ENCODE measurements at regions of chr16 and their contacts with region 1.

Region 1: GRCh38 chr16:49617016-49617629 is 238.8 kb downstream of the ZNF423 start:
- DNase-seq: no peak
- ATAC-seq: no peak
- H3K4me3 ChIP-seq: no peak overlapping the region
- H3K27ac ChIP-seq: no peak overlapping the region
- H3K4me1 ChIP-seq: peaks cover 16 to 18% of the 10 kb centered on the region in 2 experiments
- H3K27me3 ChIP-seq: peaks cover 13% of the 10 kb centered on the region
- CTCF ChIP-seq: no peak
- POLR2A ChIP-seq: no peak
- RAD21 ChIP-seq: no peak

Region 2: DNA sequence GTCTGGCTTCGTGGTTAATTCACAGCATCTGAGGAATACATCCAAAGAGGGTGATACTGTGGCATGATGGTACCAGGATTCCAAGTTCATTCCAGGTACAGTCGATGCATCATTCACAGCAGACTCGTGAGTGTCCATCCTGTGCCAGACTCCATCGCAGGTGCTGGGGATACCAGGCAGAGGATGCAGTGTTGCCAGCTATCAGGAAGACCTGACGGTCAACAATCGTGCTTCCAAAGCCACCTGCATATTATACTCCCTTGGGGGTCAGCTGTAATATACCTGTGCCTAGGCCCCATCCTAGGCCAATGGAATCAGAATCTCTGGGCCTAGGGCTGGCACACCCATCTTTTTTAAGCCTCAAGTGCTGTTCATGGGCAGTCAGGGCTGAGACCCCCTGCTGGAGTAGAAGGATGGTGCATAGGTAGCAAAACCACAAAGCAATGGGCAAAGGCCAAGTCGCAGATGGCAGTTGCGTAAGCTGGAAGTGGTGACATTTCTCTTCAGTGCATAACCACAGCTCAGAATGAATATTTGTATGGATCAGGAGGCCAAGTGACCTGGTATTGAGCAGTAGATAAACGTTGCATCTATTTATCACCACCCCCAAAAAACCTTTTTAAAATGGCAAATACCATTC is 286.4 kb before region 1 on chr16:
- CTCF ChIA-PET with region 1: no interaction called
- POLR2A ChIA-PET with region 1: no interaction called
- RAD21 ChIA-PET with region 1: no interaction called
- intact Hi-C with region 1: no loop called
- DNase-seq: no peak
- ATAC-seq: no peak
- H3K4me3 ChIP-seq: no peak overlapping the region
- H3K27ac ChIP-seq: no peak overlapping the region
- H3K4me1 ChIP-seq: no peaks in the 10 kb centered on the region
- H3K27me3 ChIP-seq: peaks cover 57% of the 10 kb centered on the region
- CTCF ChIP-seq: no peak
- POLR2A ChIP-seq: no peak
- RAD21 ChIP-seq: no peak

Region 3: DNA sequence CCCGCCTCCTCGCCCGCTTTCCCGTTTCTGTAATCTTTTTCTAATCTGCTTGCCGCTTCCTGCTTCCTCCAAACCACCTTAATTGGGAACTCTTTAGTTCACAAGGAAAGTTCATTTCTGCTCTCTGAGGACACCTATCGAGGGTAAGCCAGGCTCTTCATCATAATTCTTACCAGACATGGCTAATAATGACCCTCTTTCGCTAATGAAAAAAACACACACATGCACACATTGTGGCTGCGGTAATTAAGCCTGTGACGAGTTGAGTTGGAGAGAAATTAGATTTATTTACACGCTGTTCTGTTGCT is 138.1 kb after region 1 on chr16:
- CTCF ChIA-PET with region 1: no interaction called
- POLR2A ChIA-PET with region 1: no interaction called
- RAD21 ChIA-PET with region 1: no interaction called
- intact Hi-C with region 1: loop called (anchors 10 kb)
- DNase-seq: peak; percentile 10
- ATAC-seq: peak; percentile 84
- H3K4me3 ChIP-seq: no peak overlapping the region
- H3K27ac ChIP-seq: no peak overlapping the region
- H3K4me1 ChIP-seq: no peaks in the 10 kb centered on the region; a peak in 1 of 4 replicates
- H3K27me3 ChIP-seq: peaks cover 9% of the 10 kb centered on the region; the same call in 1 of the 2 replicates
- CTCF ChIP-seq: peak in 2 of 3 experiments; percentile 29 to 37; a peak in 2 of 6 replicates
- POLR2A ChIP-seq: no peak
- RAD21 ChIP-seq: peak; percentile 21; the same call in 1 of the 2 replicates

Region 4: GRCh38 chr16:49855280-49855821 is 238.2 kb after region 1 on chr16:
- CTCF ChIA-PET with region 1: no interaction called
- POLR2A ChIA-PET with region 1: no interaction called
- RAD21 ChIA-PET with region 1: no interaction called
- intact Hi-C with region 1: loop called (anchors 10 kb)
- DNase-seq: no peak
- ATAC-seq: peak; percentile 57
- H3K4me3 ChIP-seq: peak overlapping the region; percentile 37 to 58
- H3K27ac ChIP-seq: no peak overlapping the region; the same call in 1 of the 2 replicates
- H3K4me1 ChIP-seq: peaks cover 8 to 26% of the 10 kb centered on the region in 2 experiments; a peak in 3 of 4 replicates
- H3K27me3 ChIP-seq: peaks cover 42% of the 10 kb centered on the region
- CTCF ChIP-seq: no peak
- POLR2A ChIP-seq: no peak
- RAD21 ChIP-seq: no peak

Measured in HCT116 (cell line).